ENCODE measurements at regions of chr14 and their contacts with region 1.

Region 1: DNA sequence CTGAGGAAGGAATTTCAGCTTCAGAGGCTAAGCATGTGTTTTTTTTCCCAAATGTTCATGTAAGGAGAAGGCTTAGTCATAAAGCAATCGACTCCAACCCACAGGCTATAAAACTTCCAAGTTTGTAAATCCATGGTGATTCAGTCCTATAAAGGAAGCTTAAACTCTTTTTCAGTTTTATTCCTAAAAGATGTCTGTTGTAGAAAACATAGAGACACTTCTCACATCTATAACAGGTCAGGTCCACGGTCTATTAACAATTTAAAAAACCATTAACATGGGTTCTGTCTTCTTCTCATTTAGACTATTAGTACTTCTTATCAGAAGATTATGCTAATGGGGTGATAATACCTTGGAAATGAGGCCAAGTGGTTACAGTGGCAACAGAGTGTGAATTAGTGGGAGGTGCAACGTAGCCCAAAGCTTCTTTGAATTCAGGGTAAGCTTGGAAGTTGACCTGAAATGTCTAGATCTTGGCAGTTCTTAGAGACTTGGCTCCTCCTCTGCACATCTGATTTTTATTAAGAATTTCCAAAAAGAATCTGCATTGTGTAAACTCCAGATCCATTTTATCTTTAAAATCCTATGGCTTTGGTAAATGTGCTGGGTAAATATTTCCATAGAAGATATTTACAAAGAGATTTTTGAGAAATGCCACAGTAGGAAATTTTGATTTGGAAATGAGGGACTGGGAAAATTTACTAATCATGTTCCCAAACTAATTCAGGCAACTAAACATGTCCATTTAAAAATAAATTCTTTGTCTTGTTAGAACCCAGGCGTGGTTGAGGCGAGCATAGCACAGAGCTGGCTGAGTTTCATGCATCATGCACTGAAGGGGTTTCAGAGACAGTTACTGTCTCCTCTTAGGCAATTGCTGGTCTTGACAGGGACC is 86.4 kb downstream of the EML1 start:
- DNase-seq: no peak

Region 2: GRCh38 chr14:99518441-99519346 is 361.0 kb before region 1 on chr14:
- intact Hi-C with region 1: loop called (anchors 10 kb)
- DNase-seq: peak; percentile 49 to 96 (median 78)

Region 3: DNA sequence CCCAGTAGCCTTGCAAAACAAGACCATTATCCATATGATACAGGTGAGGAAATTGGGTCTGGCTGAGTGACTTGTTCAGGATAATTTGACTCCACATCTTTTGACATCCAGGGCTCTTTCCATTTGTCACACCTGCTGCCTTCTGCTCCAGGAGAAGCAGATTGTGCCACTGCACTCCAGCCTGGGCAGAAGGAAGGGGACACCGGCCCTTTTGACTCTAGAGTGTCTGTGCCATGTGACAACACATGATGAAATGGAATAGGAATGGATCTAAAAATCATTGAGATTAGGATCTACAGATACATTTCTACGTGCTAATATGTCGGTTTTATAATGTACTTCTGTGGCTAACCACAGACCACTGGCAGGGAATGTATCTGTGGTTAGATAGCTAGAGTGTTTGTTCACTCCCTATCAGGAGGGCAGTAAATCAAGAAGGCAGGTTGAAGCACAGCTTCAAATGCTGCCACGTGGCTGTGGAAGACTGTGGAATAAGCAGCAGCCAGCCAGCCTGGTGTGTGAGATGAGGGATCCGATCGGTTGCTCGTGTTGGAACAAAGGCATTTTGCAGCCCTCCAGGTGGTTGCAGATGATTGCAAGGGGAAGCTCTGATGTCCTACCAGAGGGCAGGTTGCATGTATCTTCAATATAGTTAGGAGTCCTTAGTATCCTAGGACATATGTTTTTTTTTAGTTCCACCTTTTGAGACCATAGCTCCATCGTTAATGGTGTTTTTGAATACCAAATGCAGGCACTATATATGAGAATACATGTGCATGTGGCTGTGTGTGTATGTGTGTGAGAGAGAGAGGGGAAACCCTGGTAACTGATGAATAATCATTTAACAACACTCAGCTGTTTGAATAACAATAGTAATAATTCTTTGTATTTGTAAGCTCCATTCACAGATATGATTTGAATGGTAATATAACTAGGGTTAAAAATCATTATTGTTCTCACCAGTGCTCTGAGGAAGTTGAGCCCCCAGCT is 57.8 kb before region 1 on chr14:
- intact Hi-C with region 1: loop called (anchors 5 kb)
- DNase-seq: no peak

Region 4: GRCh38 chr14:100078991-100079725 is 199.5 kb after region 1 on chr14:
- intact Hi-C with region 1: no loop called
- DNase-seq: peak in 3 of 10 donors; percentile 14 to 89 (median 32)